CD14-positive monocyte (primary cell): ENCODE measurements at regions of chr20 and their contacts with region 1.

Region 1: DNA sequence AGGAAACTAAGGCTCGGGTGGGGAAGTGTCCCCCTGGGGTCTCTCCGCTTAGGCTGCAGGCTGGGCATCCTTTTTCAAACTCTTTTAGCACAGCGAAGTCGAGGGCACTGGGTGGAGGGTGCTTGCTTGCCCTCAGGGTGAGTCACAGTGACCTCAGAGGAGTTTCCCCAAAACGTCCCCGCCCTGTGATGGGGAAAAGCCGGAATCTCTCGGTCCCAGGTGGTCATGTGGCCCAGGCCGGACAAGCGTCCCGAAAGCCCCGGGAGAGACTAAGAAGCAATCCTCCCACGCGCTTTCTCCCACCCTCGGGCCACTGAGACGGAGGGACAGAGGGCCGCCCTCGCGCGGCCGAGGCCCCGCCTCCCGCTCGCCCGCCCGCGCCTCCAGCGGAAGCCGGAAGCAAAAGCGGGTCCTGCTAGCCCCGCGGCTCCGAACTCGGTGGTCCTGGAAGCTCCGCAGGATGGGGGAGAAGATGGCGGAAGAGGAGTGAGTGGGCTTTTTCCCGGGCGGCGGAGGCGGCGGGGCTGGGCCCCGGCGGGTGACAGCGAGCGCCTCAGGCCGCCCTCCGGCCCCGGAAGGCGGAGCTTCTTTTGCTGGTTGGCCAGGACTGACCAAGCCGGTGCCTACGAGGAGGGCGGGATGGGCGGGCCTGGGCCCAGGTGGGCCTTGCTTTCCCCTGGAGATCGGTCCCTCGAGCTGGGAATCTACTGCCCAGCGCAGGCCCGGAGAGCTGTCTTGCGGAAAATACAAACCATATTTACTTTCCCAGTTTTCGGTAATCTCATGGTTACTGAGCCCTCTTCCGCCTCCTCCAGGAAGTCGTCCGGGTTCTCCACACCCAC is at the start of gene SLC9A8:
- DNase-seq: peak; percentile 98 to 100 (median 98)
- H3K4me3 ChIP-seq: peak within 1 kb of the TSS; percentile 76 to 98 (median 97)
- H3K4me3 Mint-ChIP-seq: peak within 1 kb of the TSS; percentile 90 to 94
- H3K27ac ChIP-seq: peak within 1 kb of the TSS; percentile 95 to 99
- H3K27ac Mint-ChIP-seq: peak within 1 kb of the TSS; percentile 99
- H3K4me1 ChIP-seq: peaks cover 28 to 40% of the 10 kb centered on the region in 2 donors
- H3K4me1 Mint-ChIP-seq: peaks cover 51% of the 10 kb centered on the region
- H3K27me3 ChIP-seq: no peaks in the 10 kb centered on the region
- H3K27me3 Mint-ChIP-seq: peaks cover 0 to 5% (median 0%) of the 10 kb centered on the region in 3 donors
- CTCF ChIP-seq: peak; percentile 16
- polyA plus RNA-seq, gene SLC9A8: 3.0 to 14.6 (median 3.3) TPM

Region 2: GRCh38 chr20:49768204-49769047 is 44.3 kb before region 1 on chr20:
- intact Hi-C with region 1: loop called (anchors 5 kb)
- DNase-seq: peak; percentile 78 to 96 (median 95)
- H3K4me3 ChIP-seq: peak overlapping the region in 1 of 3 experiments; percentile 63
- H3K4me3 Mint-ChIP-seq: peak overlapping the region; percentile 47 to 86
- H3K27ac ChIP-seq: peak overlapping the region; percentile 66 to 79
- H3K27ac Mint-ChIP-seq: peak overlapping the region; percentile 90 to 98 (median 95)
- H3K4me1 ChIP-seq: peaks cover 82 to 83% of the 10 kb centered on the region in 2 donors
- H3K4me1 Mint-ChIP-seq: peaks cover 78% of the 10 kb centered on the region
- H3K27me3 ChIP-seq: no peaks in the 10 kb centered on the region
- H3K27me3 Mint-ChIP-seq: peaks cover 0 to 5% (median 2%) of the 10 kb centered on the region in 3 donors
- CTCF ChIP-seq: no peak

Region 3: DNA sequence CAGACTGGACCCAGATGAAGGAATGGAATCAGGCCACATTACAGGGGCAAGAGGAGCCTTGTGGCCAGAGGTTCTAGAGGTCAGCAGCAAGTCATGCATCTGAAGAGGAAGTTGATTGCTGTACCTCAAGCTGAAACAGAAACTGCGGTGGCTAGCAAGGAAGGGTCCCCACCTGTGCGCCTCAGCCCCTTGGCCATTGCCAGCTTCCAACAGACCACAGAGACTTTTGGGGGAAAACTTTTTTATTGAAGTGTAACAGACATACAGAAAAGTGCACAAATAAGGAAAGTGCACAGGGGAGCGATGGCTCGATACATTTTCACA is 26.9 kb before region 1 on chr20:
- intact Hi-C with region 1: loop called in 1 of 2 experiments (anchors 2 kb)
- DNase-seq: peak; percentile 53 to 76 (median 72)
- H3K4me3 ChIP-seq: peak overlapping the region; percentile 27 to 68 (median 33)
- H3K4me3 Mint-ChIP-seq: peak overlapping the region; percentile 68 to 91
- H3K27ac ChIP-seq: peak overlapping the region; percentile 56 to 60
- H3K27ac Mint-ChIP-seq: peak overlapping the region; percentile 83 to 95 (median 91)
- H3K4me1 ChIP-seq: peaks cover 44 to 49% of the 10 kb centered on the region in 2 donors
- H3K4me1 Mint-ChIP-seq: peaks cover 49% of the 10 kb centered on the region
- H3K27me3 ChIP-seq: no peaks in the 10 kb centered on the region
- H3K27me3 Mint-ChIP-seq: peaks cover 1 to 8% (median 2%) of the 10 kb centered on the region in 3 donors
- CTCF ChIP-seq: no peak

Region 4: DNA sequence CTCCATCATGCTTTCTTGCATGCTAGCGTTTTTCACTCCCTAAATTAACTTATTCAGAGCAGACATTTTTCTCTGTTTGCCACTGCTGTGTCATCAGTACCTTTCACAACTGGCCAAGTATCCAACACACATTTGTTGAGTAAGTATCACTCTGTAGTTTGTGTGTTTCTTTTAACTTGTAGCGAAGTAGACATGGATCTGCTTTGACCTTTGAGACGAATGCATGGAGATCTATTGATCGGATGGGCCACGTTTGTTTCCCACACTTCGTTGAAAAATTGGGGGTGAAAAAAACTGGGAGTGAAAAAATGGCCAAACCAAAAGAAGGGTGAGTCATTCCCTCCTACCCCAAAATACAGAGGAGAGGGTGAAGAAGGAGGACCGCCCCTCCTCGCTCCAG is 13.0 kb before region 1 on chr20:
- intact Hi-C with region 1: loop called in 1 of 2 experiments (anchors 1 kb)
- DNase-seq: peak in 2 of 3 donors; percentile 53 to 61
- H3K4me3 ChIP-seq: no peak overlapping the region
- H3K4me3 Mint-ChIP-seq: peak overlapping the region in 1 of 2 donors; percentile 35
- H3K27ac ChIP-seq: no peak overlapping the region
- H3K27ac Mint-ChIP-seq: peak overlapping the region in 6 of 7 donors; percentile 1 to 88 (median 81)
- H3K4me1 ChIP-seq: peaks cover 36 to 49% of the 10 kb centered on the region in 2 donors
- H3K4me1 Mint-ChIP-seq: peaks cover 41% of the 10 kb centered on the region
- H3K27me3 ChIP-seq: peaks cover 3 to 5% of the 10 kb centered on the region in 2 donors
- H3K27me3 Mint-ChIP-seq: peaks cover 15 to 20% (median 17%) of the 10 kb centered on the region in 3 donors
- CTCF ChIP-seq: no peak

Region 5: DNA sequence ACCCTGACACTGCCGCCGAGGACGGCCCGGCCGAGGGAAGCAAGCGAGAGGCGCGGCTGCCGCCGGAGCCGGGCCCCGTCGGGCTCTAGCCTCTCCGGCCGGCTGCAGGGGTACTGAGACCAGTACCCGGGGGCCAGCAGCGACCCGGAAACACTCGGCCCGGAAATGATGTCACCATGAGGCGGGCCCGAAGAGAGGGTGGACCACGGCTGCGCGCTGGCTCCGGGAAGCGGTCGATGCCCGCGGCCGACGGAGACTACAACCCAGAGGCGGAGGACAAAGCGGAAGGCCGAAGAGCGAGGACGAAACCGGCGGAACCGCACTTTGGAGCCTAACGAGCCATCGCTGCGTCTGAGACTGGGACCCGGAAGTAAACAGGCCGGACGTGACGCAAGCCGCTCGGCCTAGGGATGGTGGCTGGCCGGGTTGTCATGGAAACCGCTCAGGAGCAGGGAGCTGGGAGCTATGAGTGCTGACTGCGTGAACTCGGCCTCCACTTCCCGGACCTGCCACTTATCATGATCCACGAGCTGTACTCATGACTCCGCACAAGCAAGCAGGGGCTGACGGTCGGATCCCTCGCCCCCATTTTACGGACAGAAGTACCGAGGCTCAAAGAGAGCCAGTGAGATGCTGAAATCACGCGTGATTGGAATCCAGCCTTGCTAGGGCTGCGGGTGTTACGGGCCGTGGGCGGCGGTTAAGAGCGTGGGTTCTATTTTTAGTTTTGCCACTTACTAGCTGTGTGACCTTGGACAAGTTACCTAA is 102.9 kb after region 1 on chr20 and contains the start of gene SPATA2:
- intact Hi-C with region 1: no loop called
- DNase-seq: peak; percentile 95 to 98 (median 96)
- H3K4me3 ChIP-seq: peak within 1 kb of the TSS; percentile 73 to 96 (median 85)
- H3K4me3 Mint-ChIP-seq: peak within 1 kb of the TSS; percentile 89 to 96
- H3K27ac ChIP-seq: peak within 1 kb of the TSS; percentile 96 to 98
- H3K27ac Mint-ChIP-seq: peak within 1 kb of the TSS; percentile 100
- H3K4me1 ChIP-seq: peaks cover 34 to 35% of the 10 kb centered on the region in 2 donors
- H3K4me1 Mint-ChIP-seq: peaks cover 36% of the 10 kb centered on the region
- H3K27me3 ChIP-seq: no peaks in the 10 kb centered on the region
- H3K27me3 Mint-ChIP-seq: peaks cover 0 to 1% (median 0%) of the 10 kb centered on the region in 3 donors
- CTCF ChIP-seq: no peak
- polyA plus RNA-seq, gene SPATA2: 1.9 to 13.3 (median 3.9) TPM